HCT116 (cell line): ENCODE measurements at regions of chr3 and their contacts with region 1.

Region 1: GRCh38 chr3:22117751-22118346 is 366.8 kb upstream of the ZNF385D start:
- DNase-seq: peak; percentile 6
- ATAC-seq: no peak
- H3K4me3 ChIP-seq: no peak overlapping the region
- H3K27ac ChIP-seq: no peak overlapping the region
- H3K4me1 ChIP-seq: no peaks in the 10 kb centered on the region
- H3K27me3 ChIP-seq: no peaks in the 10 kb centered on the region
- CTCF ChIP-seq: peak; percentile 20 to 63 (median 24); a peak in 4 of 6 replicates
- POLR2A ChIP-seq: no peak
- RAD21 ChIP-seq: peak; percentile 52

Region 2: GRCh38 chr3:20225769-20226168 is 1892.1 kb before region 1 on chr3:
- CTCF ChIA-PET with region 1: interaction called, 3 read pairs
- POLR2A ChIA-PET with region 1: no interaction called
- RAD21 ChIA-PET with region 1: no interaction called
- intact Hi-C with region 1: loop called (anchors 5 kb)
- DNase-seq: peak; percentile 40
- ATAC-seq: peak; percentile 81
- H3K4me3 ChIP-seq: no peak overlapping the region
- H3K27ac ChIP-seq: no peak overlapping the region
- H3K4me1 ChIP-seq: no peaks in the 10 kb centered on the region
- H3K27me3 ChIP-seq: peaks cover 19% of the 10 kb centered on the region
- CTCF ChIP-seq: peak; percentile 29 to 57 (median 56); a peak in 4 of 6 replicates
- POLR2A ChIP-seq: no peak
- RAD21 ChIP-seq: peak; percentile 73

Region 3: GRCh38 chr3:20340324-20340928 is 1777.4 kb before region 1 on chr3:
- CTCF ChIA-PET with region 1: no interaction called
- POLR2A ChIA-PET with region 1: no interaction called
- RAD21 ChIA-PET with region 1: no interaction called
- intact Hi-C with region 1: loop called (anchors 1 kb)
- DNase-seq: peak; percentile 38
- ATAC-seq: peak; percentile 86
- H3K4me3 ChIP-seq: no peak overlapping the region
- H3K27ac ChIP-seq: no peak overlapping the region
- H3K4me1 ChIP-seq: no peaks in the 10 kb centered on the region
- H3K27me3 ChIP-seq: no peaks in the 10 kb centered on the region
- CTCF ChIP-seq: peak; percentile 31 to 88 (median 84); a peak in 4 of 6 replicates
- POLR2A ChIP-seq: no peak
- RAD21 ChIP-seq: peak; percentile 71